H1 (cell line): ENCODE measurements at regions of chr21 and their contacts with region 1.

Region 1: GRCh38 chr21:25708467-25709065 is 26.1 kb downstream of the ATP5PF start:
- DNase-seq: no peak
- H3K4me3 ChIP-seq: no peak overlapping the region
- H3K27ac ChIP-seq: no peak overlapping the region
- H3K4me1 ChIP-seq: no peaks in the 10 kb centered on the region
- H3K27me3 ChIP-seq: no peaks in the 10 kb centered on the region
- CTCF ChIP-seq: peak in 2 of 3 experiments; percentile 40 to 62; a peak in 2 of 4 replicates
- EP300 ChIP-seq: no peak
- POLR2A ChIP-seq: no peak
- RAD21 ChIP-seq: peak; percentile 37 to 56; a peak in 3 of 4 replicates

Region 2: DNA sequence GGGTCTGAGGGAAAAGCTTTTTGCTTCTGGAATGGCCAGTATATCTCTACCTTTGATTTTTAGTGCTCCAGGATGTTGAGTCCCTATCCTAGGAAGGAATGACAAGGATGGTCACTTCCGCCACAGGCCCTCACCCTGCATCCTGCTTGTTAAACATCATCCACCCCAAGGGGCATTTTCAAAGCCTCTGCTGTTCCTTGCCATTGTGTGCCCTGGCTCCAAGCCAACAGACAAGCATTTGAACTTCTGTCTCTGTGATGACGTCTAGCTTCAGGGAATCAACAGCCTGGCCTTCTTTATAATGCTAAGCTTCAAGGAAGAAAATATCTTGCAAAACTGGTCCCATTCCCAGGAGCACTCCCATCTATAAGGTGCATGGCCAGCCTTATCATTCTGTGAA is 81.8 kb before region 1 on chr21:
- CTCF ChIA-PET with region 1: interaction called, 11 read pairs
- POLR2A ChIA-PET with region 1: no interaction called
- DNase-seq: no peak
- H3K4me3 ChIP-seq: no peak overlapping the region
- H3K27ac ChIP-seq: no peak overlapping the region
- H3K4me1 ChIP-seq: no peaks in the 10 kb centered on the region
- H3K27me3 ChIP-seq: no peaks in the 10 kb centered on the region
- CTCF ChIP-seq: no peak
- EP300 ChIP-seq: no peak
- POLR2A ChIP-seq: no peak
- RAD21 ChIP-seq: no peak

Region 3: DNA sequence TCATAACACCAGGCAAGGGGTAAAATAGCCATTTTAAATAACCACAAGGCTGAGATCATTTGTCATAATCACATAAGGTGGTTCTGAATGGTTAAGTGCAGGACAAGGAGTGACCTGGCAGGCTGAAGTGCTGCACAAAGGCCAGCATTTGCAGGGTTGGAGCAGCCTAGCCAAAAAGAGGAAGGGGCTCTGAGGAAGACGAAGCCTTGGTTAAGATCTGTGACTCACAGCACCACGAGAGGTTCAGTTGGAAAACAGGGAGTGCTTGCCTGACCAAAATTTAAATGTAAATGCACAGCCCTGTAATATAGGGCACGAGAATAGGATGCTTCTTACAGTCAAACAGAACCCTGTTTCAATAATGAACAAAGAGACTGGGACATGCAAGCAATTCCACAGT is 14.1 kb after region 1 on chr21:
- CTCF ChIA-PET with region 1: interaction called, 10 read pairs
- POLR2A ChIA-PET with region 1: no interaction called
- DNase-seq: no peak
- H3K4me3 ChIP-seq: no peak overlapping the region
- H3K27ac ChIP-seq: no peak overlapping the region
- H3K4me1 ChIP-seq: no peaks in the 10 kb centered on the region; a peak in 1 of 7 replicates
- H3K27me3 ChIP-seq: no peaks in the 10 kb centered on the region
- CTCF ChIP-seq: no peak
- EP300 ChIP-seq: no peak
- POLR2A ChIP-seq: no peak
- RAD21 ChIP-seq: no peak